Activated T-helper 1 cell treated with anti-CD3 and anti-CD28 coated beads, Interleukin-12 subunit alpha, Interleukin-12 subunit beta, Interleukin-2, Interleukin-4 antibody, amounts not matched to agents 30 ng/mL and 10 ng/mL and 1 ng/mL, durations not matched to agents 14 hours and 24 hours and 36 hours (primary cell): ENCODE measurements at regions of chr11 and their contacts with region 1.

Region 1: GRCh38 chr11:15074206-15075161 is 1.1 kb downstream of the CALCB start:
- DNase-seq: peak; percentile 73
- H3K4me3 Mint-ChIP-seq: peak overlapping the region; percentile 77
- H3K27ac Mint-ChIP-seq: peak overlapping the region; percentile 6
- H3K4me1 Mint-ChIP-seq: peaks cover 17% of the 10 kb centered on the region
- H3K27me3 Mint-ChIP-seq: peaks cover 13% of the 10 kb centered on the region

Region 2: GRCh38 chr11:14537134-14537599 is 537.3 kb before region 1 on chr11:
- intact Hi-C with region 1: loop called (anchors 10 kb)
- DNase-seq: peak; percentile 12
- H3K4me3 Mint-ChIP-seq: peak overlapping the region; percentile 74
- H3K27ac Mint-ChIP-seq: peak overlapping the region; percentile 89
- H3K4me1 Mint-ChIP-seq: peaks cover 48% of the 10 kb centered on the region
- H3K27me3 Mint-ChIP-seq: no peaks in the 10 kb centered on the region

Region 3: GRCh38 chr11:14789879-14790484 is 284.5 kb before region 1 on chr11:
- intact Hi-C with region 1: loop called (anchors 1 kb)
- DNase-seq: no peak
- H3K4me3 Mint-ChIP-seq: no peak overlapping the region
- H3K27ac Mint-ChIP-seq: peak overlapping the region; percentile 18
- H3K4me1 Mint-ChIP-seq: peaks cover 15% of the 10 kb centered on the region
- H3K27me3 Mint-ChIP-seq: no peaks in the 10 kb centered on the region

Region 4: GRCh38 chr11:14974515-14975251 is 99.8 kb before region 1 on chr11:
- intact Hi-C with region 1: loop called (anchors 1 kb)
- DNase-seq: peak; percentile 41
- H3K4me3 Mint-ChIP-seq: peak overlapping the region; percentile 53
- H3K27ac Mint-ChIP-seq: no peak overlapping the region
- H3K4me1 Mint-ChIP-seq: peaks cover 33% of the 10 kb centered on the region
- H3K27me3 Mint-ChIP-seq: peaks cover 81% of the 10 kb centered on the region

Region 5: DNA sequence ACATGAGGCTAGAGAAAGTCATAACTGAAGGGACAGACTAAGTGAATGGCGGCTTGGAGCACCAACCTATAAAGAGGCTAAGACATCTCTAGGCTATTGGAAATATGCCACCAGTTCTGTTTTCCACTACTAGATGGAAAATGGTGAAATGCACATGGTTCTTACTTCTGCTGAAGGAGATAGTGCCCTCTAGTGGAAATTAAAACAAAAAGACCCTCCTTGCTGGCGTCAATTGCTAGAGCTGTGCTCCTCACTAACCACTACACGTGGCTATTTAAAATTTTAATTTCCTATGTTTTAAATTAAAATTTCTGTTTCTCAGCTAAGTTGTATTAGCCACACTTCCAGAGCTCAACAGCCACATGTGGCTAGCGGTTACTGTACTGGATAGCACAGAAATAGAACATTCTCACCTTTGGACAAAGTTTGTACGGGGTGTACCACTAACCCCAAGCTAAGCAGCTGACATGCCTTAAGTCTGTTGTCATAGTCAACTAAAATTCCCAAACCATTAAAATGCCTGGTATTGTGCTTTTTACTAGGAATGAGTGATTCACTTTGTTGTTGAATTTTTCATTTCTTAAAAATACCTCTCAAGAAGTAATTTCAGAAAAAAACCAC is 68.2 kb before region 1 on chr11:
- intact Hi-C with region 1: loop called (anchors 2 kb)
- DNase-seq: no peak
- H3K4me3 Mint-ChIP-seq: no peak overlapping the region
- H3K27ac Mint-ChIP-seq: no peak overlapping the region
- H3K4me1 Mint-ChIP-seq: no peaks in the 10 kb centered on the region
- H3K27me3 Mint-ChIP-seq: peaks cover 55% of the 10 kb centered on the region

Region 6: GRCh38 chr11:15038963-15039362 is 35.5 kb before region 1 on chr11:
- intact Hi-C with region 1: loop called (anchors 2 kb)
- DNase-seq: no peak
- H3K4me3 Mint-ChIP-seq: no peak overlapping the region
- H3K27ac Mint-ChIP-seq: no peak overlapping the region
- H3K4me1 Mint-ChIP-seq: no peaks in the 10 kb centered on the region
- H3K27me3 Mint-ChIP-seq: peaks cover 16% of the 10 kb centered on the region

Region 7: DNA sequence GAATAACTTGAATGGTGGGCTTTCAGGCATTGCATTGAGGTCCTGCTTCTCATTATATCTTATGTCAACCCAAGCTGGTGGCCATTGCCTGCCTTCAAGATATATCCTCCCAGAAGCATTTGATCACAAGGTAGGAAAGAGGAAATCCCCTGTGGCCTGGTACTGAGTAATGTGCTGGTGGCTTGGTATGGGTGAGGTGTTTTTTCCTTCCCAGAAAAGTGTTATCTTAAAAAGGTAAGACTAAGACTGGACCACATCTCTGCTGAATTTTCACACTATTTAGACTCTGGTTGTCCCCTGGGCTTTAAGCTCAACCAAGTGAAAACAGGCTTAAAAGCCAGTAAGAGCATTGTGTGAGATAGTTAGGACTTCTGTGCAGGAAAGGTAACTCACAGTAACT is 43.9 kb after region 1 on chr11:
- intact Hi-C with region 1: loop called (anchors 2 kb)
- DNase-seq: peak; percentile 60
- H3K4me3 Mint-ChIP-seq: no peak overlapping the region
- H3K27ac Mint-ChIP-seq: peak overlapping the region; percentile 72
- H3K4me1 Mint-ChIP-seq: peaks cover 52% of the 10 kb centered on the region
- H3K27me3 Mint-ChIP-seq: peaks cover 17% of the 10 kb centered on the region

Region 8: GRCh38 chr11:16862746-16863145 is 1788.3 kb after region 1 on chr11:
- intact Hi-C with region 1: no loop called
- DNase-seq: no peak
- H3K4me3 Mint-ChIP-seq: no peak overlapping the region
- H3K27ac Mint-ChIP-seq: no peak overlapping the region
- H3K4me1 Mint-ChIP-seq: peaks cover 26% of the 10 kb centered on the region
- H3K27me3 Mint-ChIP-seq: peaks cover 6% of the 10 kb centered on the region